Heart left ventricle (tissue), 16 donors: ENCODE measurements at regions of chr6 and their contacts with region 1.

Region 1: GRCh38 chr6:26473758-26474438 is 16.1 kb downstream of the BTN2A1 start:
- DNase-seq: peak; percentile 78 to 86 (median 82)
- ATAC-seq: peak; percentile 97 to 98 (median 98)
- H3K4me3 ChIP-seq: peak overlapping the region; percentile 4 to 62 (median 50)
- H3K27ac ChIP-seq: peak overlapping the region; percentile 84 to 97 (median 88)
- H3K4me1 ChIP-seq: peaks cover 0 to 51% (median 7%) of the 10 kb centered on the region in 12 donors
- H3K27me3 ChIP-seq: no peaks in the 10 kb centered on the region
- CTCF ChIP-seq: no peak
- POLR2A ChIP-seq: peak in 1 of 2 donors; percentile 71

Region 2: DNA sequence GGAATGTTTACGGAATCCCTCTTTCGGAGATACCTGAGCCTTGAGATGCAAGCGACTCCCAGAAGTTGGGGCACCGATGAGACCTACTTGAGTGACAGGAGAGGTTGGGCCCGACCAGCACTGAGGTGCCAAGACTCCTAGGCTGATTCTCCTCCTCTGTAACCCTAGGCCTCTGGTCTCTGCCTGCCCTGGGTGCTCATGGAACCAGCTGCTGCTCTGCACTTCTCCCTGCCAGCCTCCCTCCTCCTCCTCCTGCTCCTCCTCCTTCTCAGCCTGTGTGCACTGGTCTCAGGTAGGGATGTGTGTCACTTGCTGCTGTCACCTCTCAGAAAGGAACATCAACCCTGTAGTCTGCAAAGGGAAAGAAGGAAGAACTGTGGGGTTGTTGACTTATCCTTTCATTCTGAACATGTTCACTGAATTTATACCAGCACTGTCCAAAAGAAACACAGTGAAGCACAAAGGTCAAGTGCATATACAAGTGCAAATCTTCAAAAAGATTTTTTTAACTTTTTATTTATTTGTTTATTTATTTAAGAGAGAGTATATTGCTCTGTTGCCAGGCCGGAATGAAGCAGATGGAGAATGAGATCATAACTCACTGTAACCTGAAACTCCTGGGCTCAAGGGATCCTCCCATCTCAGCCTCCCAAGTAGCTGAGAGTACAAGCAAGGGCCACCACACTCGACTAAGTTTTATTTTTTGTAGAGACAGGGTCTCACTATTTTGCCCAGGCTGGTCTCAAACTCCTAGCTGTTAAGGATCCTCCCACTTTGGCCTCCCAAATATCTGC is 90.1 kb before region 1 on chr6:
- intact Hi-C with region 1: no loop called
- DNase-seq: peak in 1 of 5 donors; percentile 21
- ATAC-seq: peak in 3 of 4 donors; percentile 37 to 54 (median 41)
- H3K4me3 ChIP-seq: peak overlapping the region; percentile 39 to 79 (median 67)
- H3K27ac ChIP-seq: peak overlapping the region in 8 of 12 donors; percentile 29 to 83 (median 71)
- H3K4me1 ChIP-seq: peaks cover 0 to 29% (median 6%) of the 10 kb centered on the region in 12 donors
- H3K27me3 ChIP-seq: no peaks in the 10 kb centered on the region
- CTCF ChIP-seq: no peak
- POLR2A ChIP-seq: no peak

Region 3: GRCh38 chr6:26514984-26515383 is 41.1 kb after region 1 on chr6:
- intact Hi-C with region 1: loop called in 4 of 10 experiments (anchors 5 kb)
- DNase-seq: no peak
- ATAC-seq: no peak
- H3K4me3 ChIP-seq: no peak overlapping the region
- H3K27ac ChIP-seq: no peak overlapping the region
- H3K4me1 ChIP-seq: peaks cover 0 to 1% (median 0%) of the 10 kb centered on the region in 12 donors
- H3K27me3 ChIP-seq: no peaks in the 10 kb centered on the region
- CTCF ChIP-seq: no peak
- POLR2A ChIP-seq: no peak